Activated CD8-positive, alpha-beta memory T cell treated with anti-CD3 and anti-CD28 coated beads, Interleukin-2, amount 10 ng/mL, durations not matched to agents 7 days and 5 days (primary cell): ENCODE measurements at regions of chr19 and their contacts with region 1.

Region 1: GRCh38 chr19:18408053-18408476 is 10.6 kb upstream of the LRRC25 start:
- DNase-seq: peak; percentile 48
- ATAC-seq: peak; percentile 12
- H3K4me3 Mint-ChIP-seq: no peak overlapping the region
- H3K27ac Mint-ChIP-seq: no peak overlapping the region
- H3K4me1 Mint-ChIP-seq: peaks cover 11% of the 10 kb centered on the region
- H3K27me3 Mint-ChIP-seq: peaks cover 4% of the 10 kb centered on the region

Region 2: DNA sequence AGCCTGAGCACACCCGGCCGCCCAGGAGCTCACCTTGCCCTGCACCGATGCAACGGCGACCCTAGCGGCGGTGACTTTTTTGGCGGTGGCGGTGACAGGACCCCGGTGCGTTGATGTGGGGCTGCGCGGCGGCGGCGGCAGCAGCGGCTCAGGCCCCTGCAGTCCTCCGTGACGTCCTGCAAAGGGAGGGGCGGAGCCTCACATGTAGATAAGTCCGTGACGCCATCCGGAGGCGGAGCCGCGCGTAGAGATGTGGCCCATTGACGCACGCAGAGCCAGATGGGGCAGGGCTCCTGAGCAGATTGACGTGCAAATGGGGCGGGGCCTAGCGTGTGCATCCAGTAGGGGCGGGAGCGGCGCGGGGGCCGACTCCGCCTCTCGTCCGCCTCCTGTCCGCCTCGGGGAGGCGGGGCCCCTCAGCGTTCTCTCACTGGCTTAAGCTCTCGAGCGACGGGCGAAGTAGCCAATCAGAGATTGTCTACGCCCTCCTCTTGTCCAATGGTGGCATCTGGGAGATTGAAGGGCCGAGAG is 204.1 kb before region 1 on chr19 and contains the start of gene RAB3A:
- CTCF ChIA-PET with region 1: interaction called, 16 read pairs
- DNase-seq: peak; percentile 100
- ATAC-seq: peak; percentile 93
- H3K4me3 Mint-ChIP-seq: peak within 1 kb of the TSS; percentile 83
- H3K27ac Mint-ChIP-seq: peak within 1 kb of the TSS; percentile 91
- H3K4me1 Mint-ChIP-seq: peaks cover 17% of the 10 kb centered on the region
- H3K27me3 Mint-ChIP-seq: peaks cover 5% of the 10 kb centered on the region
- total RNA-seq, gene RAB3A: 3.5 to 3.7 TPM

Region 3: DNA sequence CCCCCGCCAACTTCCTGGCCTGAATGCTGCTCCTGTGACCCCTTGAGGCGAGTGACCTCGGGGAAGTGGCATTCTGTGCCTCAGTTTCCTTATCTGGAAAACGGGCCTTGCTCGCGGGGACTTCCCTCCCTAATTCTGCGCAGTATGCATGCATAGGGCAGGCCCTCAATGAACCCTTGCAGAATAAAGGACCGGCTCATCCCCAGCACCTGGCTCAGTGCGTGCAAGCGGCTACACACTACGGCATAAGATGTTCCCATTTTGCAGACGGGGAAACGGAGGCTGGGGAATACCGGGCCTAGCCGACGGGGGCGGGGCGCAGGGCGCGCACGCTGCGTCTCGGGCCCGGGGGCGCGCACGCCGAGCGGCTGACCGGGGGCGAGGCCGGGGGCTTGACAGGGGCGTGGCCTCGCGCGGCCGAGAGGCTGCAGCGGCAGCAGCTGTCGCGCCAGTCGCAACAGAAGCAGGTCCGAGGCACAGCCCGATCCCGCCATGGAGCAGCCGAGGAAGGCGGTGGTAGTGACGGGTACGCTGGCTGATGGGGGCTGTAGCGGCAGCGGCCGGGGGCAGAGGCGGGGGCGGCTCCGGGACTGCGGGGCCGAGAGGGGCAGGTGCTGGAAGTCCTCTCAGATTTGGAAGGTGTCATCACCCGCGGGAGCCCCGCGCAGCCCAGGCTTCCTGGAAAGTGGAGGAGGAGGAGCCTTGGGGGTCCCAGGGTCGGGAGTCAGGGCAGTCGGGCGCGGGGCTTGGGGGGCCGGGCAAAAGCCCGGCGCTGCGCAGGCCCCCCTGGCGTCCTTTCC is 67.7 kb before region 1 on chr19 and contains the start of gene PGPEP1:
- CTCF ChIA-PET with region 1: interaction called, 18 read pairs
- DNase-seq: peak; percentile 73
- ATAC-seq: peak; percentile 71
- H3K4me3 Mint-ChIP-seq: peak within 1 kb of the TSS; percentile 72
- H3K27ac Mint-ChIP-seq: peak within 1 kb of the TSS; percentile 84
- H3K4me1 Mint-ChIP-seq: peaks cover 17% of the 10 kb centered on the region
- H3K27me3 Mint-ChIP-seq: no peaks in the 10 kb centered on the region
- total RNA-seq, gene PGPEP1: 35.5 to 44.7 TPM

Region 4: GRCh38 chr19:18419195-18419698 is 11.2 kb after region 1 on chr19 and contains the start of gene SSBP4:
- CTCF ChIA-PET with region 1: interaction called, 24 read pairs
- DNase-seq: peak; percentile 79
- ATAC-seq: peak; percentile 31
- H3K4me3 Mint-ChIP-seq: peak within 1 kb of the TSS; percentile 97
- H3K27ac Mint-ChIP-seq: peak within 1 kb of the TSS; percentile 93
- H3K4me1 Mint-ChIP-seq: peaks cover 81% of the 10 kb centered on the region
- H3K27me3 Mint-ChIP-seq: peaks cover 3% of the 10 kb centered on the region
- total RNA-seq, gene SSBP4: 197 to 247 TPM

Region 5: DNA sequence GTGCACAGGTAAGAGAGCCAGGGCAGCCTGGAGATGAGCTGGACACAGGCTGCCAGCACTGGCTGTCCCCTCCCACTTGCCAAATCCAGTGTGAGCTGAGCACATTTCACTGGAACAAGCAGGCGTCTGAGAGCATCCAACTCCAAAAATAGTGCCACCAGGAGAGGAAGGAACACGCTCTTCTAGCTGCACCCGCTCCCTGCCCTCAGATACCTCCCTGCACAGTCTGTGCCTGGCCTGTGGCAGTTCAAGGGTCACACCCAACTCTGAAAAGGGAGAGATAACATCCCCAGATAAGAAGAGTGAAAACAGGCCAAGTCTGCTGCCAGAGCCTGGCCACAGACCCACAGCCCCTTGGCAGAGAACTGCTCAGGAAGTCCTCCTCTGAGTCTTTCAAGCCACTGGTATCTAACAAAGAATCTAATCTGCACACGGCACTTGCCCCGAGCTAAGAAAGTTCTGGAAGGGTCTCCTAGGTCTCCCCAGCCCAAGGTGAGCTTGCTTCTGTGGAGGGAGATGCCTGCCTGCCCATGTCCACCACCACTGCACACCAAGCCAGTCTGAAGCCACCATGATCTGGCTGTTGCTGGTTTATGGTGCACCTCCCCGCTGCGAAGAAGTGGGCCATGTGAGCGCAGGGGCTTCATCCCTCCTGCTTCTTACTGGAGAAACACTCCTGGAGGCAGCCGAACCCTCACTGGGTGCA is 99.1 kb after region 1 on chr19:
- CTCF ChIA-PET with region 1: no interaction called
- DNase-seq: peak; percentile 77
- ATAC-seq: peak; percentile 74
- H3K4me3 Mint-ChIP-seq: peak overlapping the region; percentile 48
- H3K27ac Mint-ChIP-seq: peak overlapping the region; percentile 91
- H3K4me1 Mint-ChIP-seq: peaks cover 72% of the 10 kb centered on the region
- H3K27me3 Mint-ChIP-seq: no peaks in the 10 kb centered on the region